ENCODE measurements at regions of chr2 and their contacts with region 1.

Region 1: GRCh38 chr2:106020821-106021661 is 173.1 kb downstream of the UXS1 start:
- DNase-seq: no peak
- H3K4me3 ChIP-seq: no peak overlapping the region
- H3K27ac ChIP-seq: peak overlapping the region; percentile 20 to 78 (median 64)
- H3K4me1 ChIP-seq: peaks cover 0 to 32% (median 24%) of the 10 kb centered on the region in 4 donors
- H3K27me3 ChIP-seq: no peaks in the 10 kb centered on the region
- CTCF ChIP-seq: no peak
- EP300 ChIP-seq: no peak
- POLR2A ChIP-seq: no peak

Region 2: DNA sequence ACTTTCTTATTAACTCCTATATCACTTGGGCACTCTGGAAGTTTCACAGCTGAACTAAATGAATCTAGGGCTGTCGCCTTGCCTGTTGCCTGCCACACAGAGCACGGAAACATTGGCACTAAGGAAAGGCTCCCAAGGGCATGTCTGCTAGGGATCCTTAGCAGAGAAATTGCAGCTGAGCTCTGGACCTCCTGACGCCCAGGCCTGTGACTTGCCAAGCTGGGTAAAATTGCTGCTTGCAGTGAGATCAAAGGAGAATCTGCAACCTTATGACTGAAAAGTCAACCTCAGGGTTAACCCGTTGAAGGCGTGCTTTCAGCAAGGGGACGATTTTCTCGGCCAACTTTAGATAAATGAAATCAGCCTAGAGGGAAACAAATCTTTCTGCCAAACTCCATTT is 86.6 kb before region 1 on chr2:
- intact Hi-C with region 1: loop called (anchors 10 kb)
- DNase-seq: no peak
- H3K4me3 ChIP-seq: no peak overlapping the region
- H3K27ac ChIP-seq: peak overlapping the region in 2 of 4 donors; percentile 12 to 18
- H3K4me1 ChIP-seq: peaks cover 0 to 16% (median 15%) of the 10 kb centered on the region in 4 donors
- H3K27me3 ChIP-seq: no peaks in the 10 kb centered on the region
- CTCF ChIP-seq: no peak
- EP300 ChIP-seq: no peak
- POLR2A ChIP-seq: no peak

Region 3: DNA sequence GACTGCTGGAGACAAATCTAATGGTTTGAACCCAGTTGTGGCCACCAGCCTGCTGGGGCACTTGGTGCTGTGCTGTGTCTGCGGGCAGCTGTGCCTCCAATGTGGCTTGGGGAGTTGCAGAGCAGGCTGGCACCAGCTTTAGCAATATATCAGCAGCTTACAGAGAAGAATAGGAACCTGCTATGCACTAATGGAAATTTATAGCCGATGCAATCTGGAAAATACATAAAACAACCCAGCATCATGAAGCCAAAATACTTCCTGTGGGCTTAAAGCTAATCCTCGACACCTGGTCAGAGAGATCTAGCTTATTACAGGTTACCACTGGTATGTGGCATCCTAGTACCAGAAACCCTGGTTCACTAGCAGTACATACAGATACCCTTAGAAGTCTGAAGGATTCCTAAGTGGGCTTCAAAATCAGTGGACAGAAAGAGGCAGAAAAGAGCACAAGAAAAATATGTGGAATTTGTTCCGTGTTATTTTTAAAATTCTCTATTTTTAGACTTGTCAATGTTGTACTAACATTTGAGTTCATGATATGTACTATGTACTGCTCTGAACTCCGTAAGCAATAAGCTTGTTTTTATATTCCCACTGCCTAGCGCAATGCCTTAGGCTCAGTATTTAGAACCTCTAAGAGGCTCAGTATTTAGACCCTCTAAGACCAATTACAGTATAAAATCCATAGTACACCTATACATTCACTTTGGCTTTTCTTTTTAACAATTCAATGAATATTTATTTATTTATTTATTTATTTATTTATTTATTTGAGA is 21.6 kb before region 1 on chr2:
- intact Hi-C with region 1: no loop called
- DNase-seq: no peak
- H3K4me3 ChIP-seq: no peak overlapping the region
- H3K27ac ChIP-seq: no peak overlapping the region
- H3K4me1 ChIP-seq: no peaks in the 10 kb centered on the region
- H3K27me3 ChIP-seq: no peaks in the 10 kb centered on the region
- CTCF ChIP-seq: no peak
- EP300 ChIP-seq: no peak
- POLR2A ChIP-seq: no peak

Region 4: GRCh38 chr2:106189764-106190468 is 168.9 kb after region 1 on chr2:
- intact Hi-C with region 1: no loop called
- DNase-seq: no peak
- H3K4me3 ChIP-seq: no peak overlapping the region
- H3K27ac ChIP-seq: no peak overlapping the region
- H3K4me1 ChIP-seq: peaks cover 0 to 30% (median 16%) of the 10 kb centered on the region in 4 donors
- H3K27me3 ChIP-seq: no peaks in the 10 kb centered on the region
- CTCF ChIP-seq: no peak
- EP300 ChIP-seq: no peak
- POLR2A ChIP-seq: no peak

Region 5: DNA sequence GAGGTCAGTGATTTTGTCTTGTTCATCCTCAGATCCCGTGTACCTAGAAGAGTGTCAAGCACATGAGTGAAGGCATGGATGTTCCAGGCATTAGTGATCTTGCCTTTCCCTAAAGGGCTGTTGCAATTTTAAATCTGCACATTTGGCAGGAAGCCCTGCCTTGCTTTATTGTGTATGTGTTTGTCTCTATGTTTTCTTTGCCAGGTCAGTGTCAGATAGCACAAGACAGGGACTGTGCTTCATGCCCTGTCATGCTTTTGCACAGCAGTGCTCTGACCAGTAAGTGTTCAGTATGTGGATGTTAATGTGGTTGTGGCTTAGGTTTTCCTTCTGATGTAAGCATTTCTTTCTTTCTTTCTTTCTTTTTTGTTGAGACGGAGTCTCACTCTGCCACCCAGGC is 315.7 kb after region 1 on chr2:
- intact Hi-C with region 1: no loop called
- DNase-seq: no peak
- H3K4me3 ChIP-seq: no peak overlapping the region
- H3K27ac ChIP-seq: no peak overlapping the region
- H3K4me1 ChIP-seq: no peaks in the 10 kb centered on the region
- H3K27me3 ChIP-seq: no peaks in the 10 kb centered on the region
- CTCF ChIP-seq: no peak
- EP300 ChIP-seq: no peak
- POLR2A ChIP-seq: no peak